GM12878 (cell line): ENCODE measurements at regions of chr4 and their contacts with region 1.

Region 1: GRCh38 chr4:16443504-16444088 is 217.3 kb upstream of the TAPT1 start:
- DNase-seq: no peak
- ATAC-seq: peak; percentile 78
- H3K4me3 ChIP-seq: no peak overlapping the region
- H3K27ac ChIP-seq: no peak overlapping the region
- H3K4me1 ChIP-seq: no peaks in the 10 kb centered on the region
- H3K27me3 ChIP-seq: no peaks in the 10 kb centered on the region
- CTCF ChIP-seq: peak; percentile 52 to 70 (median 55)
- EP300 ChIP-seq: no peak
- POLR2A ChIP-seq: no peak
- RAD21 ChIP-seq: peak; percentile 39; the same call in 1 of the 2 replicates

Region 2: DNA sequence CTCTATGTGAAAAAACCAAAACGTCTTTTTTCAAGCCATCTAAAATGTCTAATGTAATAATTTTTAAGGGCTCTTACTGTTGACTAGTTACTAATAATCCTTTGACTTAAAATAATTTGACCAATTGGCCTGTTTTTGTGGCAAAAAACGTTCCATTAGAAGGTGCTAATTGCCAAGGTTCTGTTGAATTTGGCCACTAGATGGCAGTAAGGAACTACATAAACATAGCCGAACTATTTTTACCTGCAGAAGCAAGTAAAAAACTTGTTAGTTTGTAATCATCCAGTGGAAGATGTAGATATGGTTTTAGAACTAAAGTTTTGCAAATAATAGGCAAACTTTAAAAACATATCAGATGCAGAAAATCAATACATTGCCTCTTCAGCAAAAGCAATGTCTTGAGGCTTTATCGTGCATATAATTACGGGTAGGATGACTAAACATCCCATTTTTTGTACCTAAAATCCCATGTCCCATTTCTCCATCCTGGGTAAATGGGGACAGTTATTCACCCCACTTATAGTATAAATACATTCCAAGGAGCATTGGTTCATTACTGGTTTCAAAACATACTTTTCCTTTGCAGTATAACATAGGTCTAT is 417.3 kb before region 1 on chr4:
- CTCF ChIA-PET with region 1: no interaction called
- POLR2A ChIA-PET with region 1: no interaction called
- RAD21 ChIA-PET with region 1: no interaction called
- SMC1A ChIA-PET with region 1: no interaction called
- in situ Hi-C with region 1: loop called (anchors 10 kb)
- intact Hi-C with region 1: loop called (anchors 1 kb)
- DNase-seq: peak; percentile 25
- ATAC-seq: peak; percentile 58
- H3K4me3 ChIP-seq: no peak overlapping the region
- H3K27ac ChIP-seq: no peak overlapping the region
- H3K4me1 ChIP-seq: no peaks in the 10 kb centered on the region
- H3K27me3 ChIP-seq: no peaks in the 10 kb centered on the region; a peak in 1 of 4 replicates
- CTCF ChIP-seq: peak; percentile 64 to 78 (median 64)
- EP300 ChIP-seq: no peak
- POLR2A ChIP-seq: no peak
- RAD21 ChIP-seq: peak; percentile 92

Region 3: GRCh38 chr4:16034010-16034829 is 409.4 kb before region 1 on chr4:
- CTCF ChIA-PET with region 1: no interaction called
- POLR2A ChIA-PET with region 1: no interaction called
- RAD21 ChIA-PET with region 1: no interaction called
- SMC1A ChIA-PET with region 1: no interaction called
- in situ Hi-C with region 1: loop called (anchors 10 kb)
- intact Hi-C with region 1: no loop called
- DNase-seq: no peak
- ATAC-seq: no peak
- H3K4me3 ChIP-seq: no peak overlapping the region
- H3K27ac ChIP-seq: no peak overlapping the region
- H3K4me1 ChIP-seq: no peaks in the 10 kb centered on the region
- H3K27me3 ChIP-seq: peaks cover 2% of the 10 kb centered on the region in 2 experiments; a peak in 2 of 4 replicates
- CTCF ChIP-seq: no peak
- EP300 ChIP-seq: no peak
- POLR2A ChIP-seq: no peak
- RAD21 ChIP-seq: no peak